GM23248 (cell line): ENCODE measurements at regions of chr12 and their contacts with region 1.

Region 1: DNA sequence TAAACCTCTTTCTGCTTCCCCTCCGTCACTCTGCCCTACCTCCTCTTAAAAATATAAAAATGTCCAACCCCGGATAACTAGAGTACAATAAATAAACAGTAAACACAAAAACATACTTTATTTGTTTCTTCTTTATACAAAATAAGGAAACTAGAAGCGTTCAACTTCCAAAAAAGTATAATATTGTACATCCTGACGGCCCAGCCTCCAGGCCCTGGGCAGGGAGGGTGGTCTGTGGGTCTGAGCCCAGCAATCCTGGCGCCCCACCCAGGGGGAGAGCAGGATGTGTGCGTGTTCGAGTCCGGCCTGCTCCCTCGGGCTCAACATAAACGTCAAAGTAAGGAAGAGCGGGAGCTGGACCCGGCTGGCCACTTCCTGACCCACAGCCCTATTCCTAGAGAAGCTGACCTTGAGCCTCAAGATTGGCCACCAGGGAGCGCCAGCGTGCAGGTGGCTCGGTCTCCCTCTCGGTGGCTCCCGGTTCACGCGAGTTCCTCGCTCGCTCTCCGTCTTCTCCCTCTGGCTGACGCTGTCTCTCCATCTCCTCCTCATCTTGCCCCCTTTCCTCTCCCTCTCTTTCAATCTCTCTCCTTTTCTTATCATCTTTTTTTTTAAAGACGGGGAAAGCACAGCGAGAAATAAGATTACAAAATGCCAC is 9.4 kb downstream of the LHX5 start:
- DNase-seq: peak; percentile 83
- H3K4me3 ChIP-seq: no peak overlapping the region
- H3K27ac ChIP-seq: no peak overlapping the region
- H3K4me1 ChIP-seq: no peaks in the 10 kb centered on the region; the same call in 1 of the 2 replicates
- H3K27me3 ChIP-seq: peaks cover 66% of the 10 kb centered on the region

Region 2: DNA sequence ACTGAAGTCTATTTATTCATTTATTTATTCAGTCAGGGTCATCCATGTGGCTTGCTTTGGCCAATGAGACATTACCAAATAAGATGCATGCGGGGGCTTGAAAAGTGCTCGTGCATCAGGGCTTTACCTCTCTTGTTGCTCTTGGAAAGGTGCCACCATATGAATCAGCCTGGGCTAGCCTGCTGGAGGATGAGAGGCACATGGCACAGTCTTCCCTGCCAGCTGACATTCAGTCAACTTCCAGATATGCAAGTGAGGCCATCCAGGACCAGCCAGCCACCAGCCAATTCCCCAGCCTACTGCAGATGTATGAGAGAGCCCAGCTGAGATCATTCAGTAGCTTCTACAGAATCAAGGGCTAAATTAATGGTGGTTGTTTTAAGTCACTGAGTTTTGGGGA is 775.9 kb before region 1 on chr12:
- in situ Hi-C with region 1: no loop called
- DNase-seq: peak; percentile 19
- H3K4me3 ChIP-seq: no peak overlapping the region
- H3K27ac ChIP-seq: no peak overlapping the region
- H3K4me1 ChIP-seq: no peaks in the 10 kb centered on the region
- H3K27me3 ChIP-seq: no peaks in the 10 kb centered on the region

Region 3: GRCh38 chr12:113912760-113913329 is 450.6 kb after region 1 on chr12:
- in situ Hi-C with region 1: loop called (anchors 25 kb)
- DNase-seq: peak; percentile 67
- H3K4me3 ChIP-seq: no peak overlapping the region
- H3K27ac ChIP-seq: no peak overlapping the region
- H3K4me1 ChIP-seq: no peaks in the 10 kb centered on the region
- H3K27me3 ChIP-seq: no peaks in the 10 kb centered on the region